ENCODE measurements at regions of chrX and their contacts with region 1.

Region 1: GRCh38 chrX:50579955-50580354 is 109.3 kb upstream of the DGKK start:
- DNase-seq: peak; percentile 57
- ATAC-seq: peak; percentile 79
- H3K4me3 ChIP-seq: no peak overlapping the region
- H3K27ac ChIP-seq: no peak overlapping the region
- H3K4me1 ChIP-seq: no peaks in the 10 kb centered on the region
- H3K27me3 ChIP-seq: peaks cover 4% of the 10 kb centered on the region
- CTCF ChIP-seq: peak; percentile 52
- POLR2A ChIP-seq: no peak
- RAD21 ChIP-seq: peak; percentile 56

Region 2: GRCh38 chrX:48631350-48632090 is 1948.4 kb before region 1 on chrX:
- CTCF ChIA-PET with region 1: no interaction called
- POLR2A ChIA-PET with region 1: no interaction called
- dilution Hi-C with region 1: no loop called
- in situ Hi-C with region 1: no loop called
- intact Hi-C with region 1: loop called (anchors 5 kb)
- DNase-seq: peak; percentile 87
- ATAC-seq: peak; percentile 97
- H3K4me3 ChIP-seq: no peak overlapping the region
- H3K27ac ChIP-seq: no peak overlapping the region
- H3K4me1 ChIP-seq: no peaks in the 10 kb centered on the region
- H3K27me3 ChIP-seq: peaks cover 3% of the 10 kb centered on the region
- CTCF ChIP-seq: peak; percentile 78
- POLR2A ChIP-seq: no peak
- RAD21 ChIP-seq: peak; percentile 88

Region 3: GRCh38 chrX:49884290-49884862 is 695.6 kb before region 1 on chrX:
- CTCF ChIA-PET with region 1: no interaction called
- POLR2A ChIA-PET with region 1: no interaction called
- dilution Hi-C with region 1: no loop called
- in situ Hi-C with region 1: no loop called
- intact Hi-C with region 1: loop called (anchors 10 kb)
- DNase-seq: peak; percentile 35
- ATAC-seq: peak; percentile 57
- H3K4me3 ChIP-seq: no peak overlapping the region
- H3K27ac ChIP-seq: no peak overlapping the region
- H3K4me1 ChIP-seq: 0 out of 2 replicates have a peak, but pooled peaks cover 1% of the 10 kb centered on the region
- H3K27me3 ChIP-seq: peaks cover 4% of the 10 kb centered on the region
- CTCF ChIP-seq: peak; percentile 64
- POLR2A ChIP-seq: no peak
- RAD21 ChIP-seq: peak; percentile 46

Region 4: DNA sequence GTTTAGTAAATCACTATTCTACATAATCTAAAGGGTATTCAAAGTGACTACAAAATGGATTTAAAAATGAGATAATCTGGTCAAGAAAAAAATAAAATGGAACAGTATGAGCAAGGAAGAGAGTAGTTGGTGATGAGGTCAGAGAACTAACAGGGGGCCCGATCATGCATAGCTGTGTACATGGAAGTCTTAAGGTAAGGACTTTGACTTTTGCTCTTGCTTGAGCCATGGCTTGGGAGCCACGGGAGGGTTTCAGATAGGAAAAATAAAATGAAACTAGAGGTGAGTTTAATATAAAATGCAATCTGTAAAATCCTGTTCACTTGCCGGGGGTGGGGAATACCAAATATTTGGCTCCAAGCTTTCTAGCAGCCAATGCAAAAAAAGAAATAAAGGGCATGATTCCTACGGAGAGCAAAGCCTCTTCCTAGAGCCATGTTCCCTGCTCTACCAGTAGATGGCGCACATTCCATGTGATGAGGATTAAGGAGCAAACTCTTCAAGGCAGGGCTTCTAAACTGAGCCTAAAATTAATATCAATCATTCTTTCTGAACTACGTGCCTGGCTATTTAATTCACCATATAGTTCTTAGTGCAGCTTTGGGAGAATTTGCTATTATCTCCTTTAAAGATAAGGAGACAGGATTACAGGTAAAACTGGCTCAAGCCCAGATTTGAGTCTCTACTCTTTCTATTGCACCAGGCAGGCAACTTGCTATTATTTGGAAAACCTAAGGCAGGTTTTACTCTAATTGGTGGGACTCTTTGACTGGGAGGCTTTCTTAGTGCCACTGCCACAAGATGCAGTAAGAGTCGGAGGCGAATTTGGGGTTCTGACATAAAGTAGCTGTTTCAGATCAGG is 664.4 kb before region 1 on chrX:
- CTCF ChIA-PET with region 1: no interaction called
- POLR2A ChIA-PET with region 1: no interaction called
- dilution Hi-C with region 1: no loop called
- in situ Hi-C with region 1: loop called (anchors 25 kb)
- intact Hi-C with region 1: loop called (anchors 1 kb)
- DNase-seq: peak; percentile 62
- ATAC-seq: peak; percentile 96
- H3K4me3 ChIP-seq: no peak overlapping the region
- H3K27ac ChIP-seq: no peak overlapping the region
- H3K4me1 ChIP-seq: no peaks in the 10 kb centered on the region
- H3K27me3 ChIP-seq: peaks cover 7% of the 10 kb centered on the region
- CTCF ChIP-seq: peak; percentile 87
- POLR2A ChIP-seq: no peak
- RAD21 ChIP-seq: peak; percentile 81

Region 5: DNA sequence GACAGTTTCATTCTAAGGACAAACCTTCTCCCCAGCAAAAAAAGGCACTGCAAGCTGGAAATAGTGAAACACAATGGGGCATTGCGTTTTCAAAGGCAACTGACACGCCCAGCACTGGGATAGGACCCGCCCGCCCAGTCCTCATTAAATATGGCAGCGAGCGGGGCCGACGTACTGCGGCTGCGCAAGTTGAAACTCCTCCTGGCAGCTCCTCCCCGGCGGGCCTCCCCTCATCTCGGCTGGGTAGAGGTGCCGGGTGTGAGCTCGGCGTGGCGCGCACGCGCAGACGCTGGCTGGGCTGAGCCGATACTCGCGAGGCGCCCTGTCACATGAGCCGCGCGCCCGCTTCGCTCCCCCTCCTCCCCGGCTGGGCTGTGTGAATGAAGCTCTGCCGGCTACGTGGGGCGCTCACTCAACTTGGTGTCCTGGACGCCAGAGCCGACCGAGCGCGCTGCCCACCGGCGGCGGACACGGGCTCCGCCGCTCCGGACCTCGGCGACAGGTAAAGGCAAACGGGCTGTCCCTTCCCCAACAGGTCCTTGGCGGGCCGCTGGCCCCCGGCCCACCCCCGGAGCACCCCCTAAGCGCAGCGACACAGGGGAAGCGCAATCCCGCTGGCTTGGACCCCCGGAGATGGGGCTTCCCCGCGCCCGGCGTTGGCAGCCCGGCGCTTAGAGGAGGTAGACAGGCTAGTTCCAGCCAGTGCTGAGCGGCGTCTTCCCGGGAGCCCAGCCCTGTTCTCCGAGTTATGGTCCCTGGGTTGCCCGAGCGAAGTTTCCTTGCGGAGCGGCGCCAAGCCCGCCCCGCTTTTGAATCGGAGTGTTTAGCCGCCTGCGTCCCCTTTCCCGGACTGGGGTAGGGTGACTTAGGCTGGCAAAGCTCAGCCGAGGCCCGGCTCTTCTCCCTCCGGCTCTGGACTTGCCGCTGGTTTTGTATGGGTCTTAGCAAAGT is 657.4 kb before region 1 on chrX and contains the start of gene CLCN5:
- CTCF ChIA-PET with region 1: no interaction called
- POLR2A ChIA-PET with region 1: no interaction called
- dilution Hi-C with region 1: no loop called
- in situ Hi-C with region 1: loop called (anchors 25 kb)
- intact Hi-C with region 1: no loop called
- DNase-seq: peak; percentile 91
- ATAC-seq: peak; percentile 95
- H3K4me3 ChIP-seq: peak within 1 kb of the TSS; percentile 56
- H3K27ac ChIP-seq: peak within 1 kb of the TSS; percentile 4; the same call in 1 of the 2 replicates
- H3K4me1 ChIP-seq: no peaks in the 10 kb centered on the region
- H3K27me3 ChIP-seq: no peaks in the 10 kb centered on the region
- CTCF ChIP-seq: no peak
- POLR2A ChIP-seq: no peak
- RAD21 ChIP-seq: no peak
- total RNA-seq, gene CLCN5: 5.8 and 5.9 TPM in 2 replicates

Region 6: DNA sequence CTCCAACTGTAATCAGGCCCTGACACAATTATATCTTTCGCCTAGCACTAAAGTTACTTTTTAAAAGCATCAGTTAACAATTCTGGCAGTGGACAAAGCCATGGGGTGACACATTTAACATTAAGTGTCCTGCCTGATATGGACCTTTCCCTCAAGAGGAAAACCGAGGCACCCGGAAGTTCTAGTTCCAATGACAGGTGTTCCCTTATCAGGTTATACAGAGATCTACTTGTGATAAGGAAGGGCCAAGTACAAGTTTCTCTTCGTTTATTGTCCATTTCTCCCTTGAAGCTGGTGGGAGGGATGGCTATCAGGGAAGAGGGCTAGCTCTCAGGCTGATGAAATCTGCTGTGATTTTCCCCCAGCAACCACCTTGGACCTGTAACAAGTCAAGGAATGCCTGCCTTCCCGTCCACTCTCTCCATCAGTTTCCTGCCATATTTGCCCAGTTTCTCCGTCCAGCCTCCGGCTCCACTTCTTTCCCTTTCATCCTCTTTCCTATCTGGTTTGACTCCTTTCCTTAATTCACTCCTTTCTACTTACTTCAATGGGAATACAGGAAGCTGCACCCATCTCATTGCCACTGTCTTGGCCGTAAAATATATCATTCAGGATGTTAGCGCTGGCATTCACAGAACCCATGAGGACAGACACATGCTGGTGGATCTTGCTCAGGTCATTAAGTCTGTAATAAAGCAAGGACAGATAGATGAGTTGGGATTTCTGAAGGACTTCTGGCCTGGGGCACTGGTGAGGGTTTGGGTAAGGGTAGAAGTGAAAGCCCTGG is 204.3 kb before region 1 on chrX:
- CTCF ChIA-PET with region 1: no interaction called
- POLR2A ChIA-PET with region 1: no interaction called
- dilution Hi-C with region 1: no loop called
- in situ Hi-C with region 1: no loop called
- intact Hi-C with region 1: no loop called
- DNase-seq: no peak
- ATAC-seq: no peak
- H3K4me3 ChIP-seq: no peak overlapping the region
- H3K27ac ChIP-seq: no peak overlapping the region
- H3K4me1 ChIP-seq: no peaks in the 10 kb centered on the region
- H3K27me3 ChIP-seq: peaks cover 6% of the 10 kb centered on the region
- CTCF ChIP-seq: no peak
- POLR2A ChIP-seq: no peak
- RAD21 ChIP-seq: no peak

Measured in IMR-90 (cell line).